Activated CD4-positive, alpha-beta T cell treated with anti-CD3 and anti-CD28 coated beads, Interleukin-2, amount 10 ng/mL, durations not matched to agents 24 days and 14 days (primary cell): ENCODE measurements at regions of chr20 and their contacts with region 1.

Region 1: DNA sequence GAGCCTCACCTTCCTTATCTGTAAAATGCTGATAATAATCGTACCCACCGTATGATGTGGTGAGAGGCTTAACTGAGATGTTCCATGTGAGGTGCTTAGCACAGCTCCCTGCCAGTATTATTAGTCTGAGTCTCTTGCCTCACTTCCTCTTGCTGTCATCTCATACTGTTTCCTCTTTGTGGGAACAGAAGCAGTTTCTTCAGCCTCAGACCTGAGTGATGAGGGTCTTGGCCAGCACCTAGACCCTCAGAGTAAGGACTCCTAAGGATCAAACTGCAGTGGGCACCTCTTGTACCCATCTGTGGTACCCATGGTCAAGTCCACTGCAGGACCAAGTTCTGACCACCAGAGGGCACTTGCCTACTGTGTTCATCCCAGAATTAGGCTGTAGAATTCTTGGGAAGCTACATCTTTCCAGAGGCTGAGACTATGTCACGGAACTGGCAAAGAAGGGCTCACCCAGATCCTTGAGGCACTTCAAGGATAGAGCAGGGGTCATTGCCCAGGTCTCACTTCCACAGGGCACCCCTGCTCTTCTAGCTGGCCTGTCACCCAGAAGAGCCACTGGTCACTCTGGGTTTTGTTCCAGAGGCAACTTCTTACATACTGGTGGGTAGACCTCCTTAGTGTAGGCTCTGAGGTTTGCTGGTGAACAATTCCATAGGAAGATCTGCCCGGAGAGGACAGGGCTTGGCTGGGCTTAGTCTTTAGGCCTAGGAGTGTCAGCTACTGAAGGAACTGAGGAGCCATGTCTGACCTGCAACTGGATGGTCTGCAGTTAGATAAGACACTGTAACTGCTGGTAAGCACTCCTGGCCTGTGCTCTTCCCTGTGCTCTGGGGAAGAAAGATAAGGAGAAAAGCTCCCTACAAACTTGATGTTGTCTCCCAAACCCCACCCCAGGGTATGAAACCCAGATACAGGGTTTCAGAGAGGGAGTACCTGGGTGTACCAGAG is 20.6 kb upstream of the SGK2 start:
- DNase-seq: peak; percentile 83
- H3K4me3 Mint-ChIP-seq: no peak overlapping the region
- H3K27ac Mint-ChIP-seq: no peak overlapping the region
- H3K4me1 Mint-ChIP-seq: no peaks in the 10 kb centered on the region
- H3K27me3 Mint-ChIP-seq: no peaks in the 10 kb centered on the region

Region 2: DNA sequence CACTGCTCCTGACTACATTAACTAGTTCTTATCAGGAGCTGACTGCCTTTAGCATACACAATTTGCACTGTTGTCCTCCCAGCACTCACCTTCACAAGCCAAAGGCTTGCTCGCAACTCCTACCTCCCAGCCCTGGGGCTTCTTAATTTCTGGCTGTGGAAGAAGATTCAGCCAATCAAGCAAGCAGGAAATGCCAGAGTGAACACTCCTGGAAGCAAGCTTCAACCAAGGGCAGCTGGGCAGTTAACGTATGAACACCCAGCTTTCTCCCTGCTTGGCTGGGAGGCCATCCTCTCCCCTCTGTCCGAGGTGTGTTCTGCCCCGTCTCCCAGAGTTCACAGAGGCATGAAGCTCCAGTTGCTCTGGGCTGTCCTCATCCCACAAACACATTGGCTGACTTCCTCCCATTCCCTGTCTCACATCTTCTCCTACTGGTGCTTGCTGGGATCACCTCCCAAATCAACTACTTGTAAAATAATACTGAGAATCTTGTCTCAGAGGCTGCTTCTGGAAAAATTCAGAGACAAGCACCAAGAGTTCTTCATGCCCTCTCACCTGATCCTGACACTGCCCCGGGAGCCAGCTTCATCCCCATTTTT is 95.8 kb before region 1 on chr20:
- intact Hi-C with region 1: no loop called
- DNase-seq: no peak
- H3K4me3 Mint-ChIP-seq: no peak overlapping the region
- H3K27ac Mint-ChIP-seq: no peak overlapping the region
- H3K4me1 Mint-ChIP-seq: peaks cover 2% of the 10 kb centered on the region
- H3K27me3 Mint-ChIP-seq: no peaks in the 10 kb centered on the region

Region 3: GRCh38 chr20:43691928-43692524 is 153.8 kb after region 1 on chr20:
- intact Hi-C with region 1: loop called (anchors 1 kb)
- DNase-seq: peak; percentile 88
- H3K4me3 Mint-ChIP-seq: no peak overlapping the region
- H3K27ac Mint-ChIP-seq: no peak overlapping the region
- H3K4me1 Mint-ChIP-seq: peaks cover 11% of the 10 kb centered on the region
- H3K27me3 Mint-ChIP-seq: no peaks in the 10 kb centered on the region